Heart right ventricle (tissue), 16 donors: ENCODE measurements at regions of chr9 and their contacts with region 1.

Region 1: DNA sequence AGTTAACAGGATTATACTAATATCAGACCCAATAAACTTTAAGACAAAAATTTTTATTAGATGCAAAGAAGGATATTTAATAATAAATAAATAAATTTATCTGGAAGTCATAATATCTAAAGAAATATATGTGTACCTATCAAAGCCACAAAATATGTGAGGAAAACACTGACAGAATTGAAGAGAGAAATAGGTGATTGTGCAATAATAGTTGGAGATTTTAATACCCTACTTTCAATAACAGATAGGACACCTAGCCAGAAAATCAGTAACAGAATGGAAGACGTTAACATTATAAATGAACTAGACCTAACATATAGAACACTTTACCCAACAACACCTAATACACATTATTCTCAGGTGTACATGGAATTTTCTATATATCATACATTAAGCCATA is 541.4 kb upstream of the SMC2 start:
- DNase-seq: no peak
- ATAC-seq: no peak
- H3K4me3 ChIP-seq: no peak overlapping the region
- H3K27ac ChIP-seq: no peak overlapping the region
- H3K4me1 ChIP-seq: no peaks in the 10 kb centered on the region
- H3K27me3 ChIP-seq: no peaks in the 10 kb centered on the region
- CTCF ChIP-seq: no peak

Region 2: GRCh38 chr9:101738566-101739183 is 1814.0 kb before region 1 on chr9 and contains the start of gene GRIN3A:
- intact Hi-C with region 1: no loop called
- DNase-seq: peak; percentile 19 to 42
- ATAC-seq: peak; percentile 65 to 91 (median 82)
- H3K4me3 ChIP-seq: peak within 1 kb of the TSS; percentile 39 to 59 (median 50)
- H3K27ac ChIP-seq: peak within 1 kb of the TSS in 2 of 10 donors; percentile 9 to 56
- H3K4me1 ChIP-seq: peaks cover 0 to 19% (median 10%) of the 10 kb centered on the region in 9 donors
- H3K27me3 ChIP-seq: peaks cover 9 to 79% (median 66%) of the 10 kb centered on the region in 7 donors
- CTCF ChIP-seq: peak in 3 of 9 donors; percentile 13 to 44 (median 26)
- total RNA-seq, gene GRIN3A: 0.07 to 1.4 (median 0.38) TPM

Region 3: GRCh38 chr9:103574056-103574455 is 21.3 kb after region 1 on chr9:
- intact Hi-C with region 1: no loop called
- DNase-seq: no peak
- ATAC-seq: no peak
- H3K4me3 ChIP-seq: no peak overlapping the region
- H3K27ac ChIP-seq: no peak overlapping the region
- H3K4me1 ChIP-seq: no peaks in the 10 kb centered on the region
- H3K27me3 ChIP-seq: no peaks in the 10 kb centered on the region
- CTCF ChIP-seq: no peak

Region 4: GRCh38 chr9:103837940-103838339 is 285.2 kb after region 1 on chr9:
- intact Hi-C with region 1: loop called in 1 of 10 experiments (anchors 5 kb)
- DNase-seq: no peak
- ATAC-seq: no peak
- H3K4me3 ChIP-seq: no peak overlapping the region
- H3K27ac ChIP-seq: no peak overlapping the region
- H3K4me1 ChIP-seq: no peaks in the 10 kb centered on the region
- H3K27me3 ChIP-seq: no peaks in the 10 kb centered on the region
- CTCF ChIP-seq: no peak